Activated naive CD4-positive, alpha-beta T cell treated with anti-CD3 and anti-CD28 coated beads for 36 hours (primary cell): ENCODE measurements at regions of chr21 and their contacts with region 1.

Region 1: DNA sequence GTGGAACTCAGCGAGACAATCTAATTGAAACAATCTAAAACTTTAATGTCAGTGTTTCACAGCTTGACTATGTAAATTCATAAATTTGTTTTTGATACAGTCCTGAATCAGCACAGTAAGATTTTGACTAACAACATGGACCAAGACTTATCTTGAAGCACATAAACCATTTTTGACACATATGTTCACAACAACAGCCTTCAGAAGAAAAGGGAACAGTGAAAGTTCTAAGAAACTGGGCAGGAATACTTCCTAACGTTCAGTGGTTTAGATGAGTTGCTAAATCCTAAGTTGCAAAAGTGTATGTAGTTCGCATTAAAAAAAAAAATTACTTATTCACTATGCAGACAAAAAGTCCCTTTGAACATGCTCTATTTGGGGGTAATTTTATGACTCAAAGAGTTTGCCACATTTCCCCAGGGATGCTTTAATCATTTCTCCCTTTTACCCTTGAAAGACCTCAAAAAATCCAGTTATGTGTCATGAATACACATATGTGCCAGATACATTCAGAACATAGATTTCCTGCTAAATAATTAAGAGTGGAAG is 120.2 kb downstream of the MRPL39 start:
- DNase-seq: no peak
- H3K4me3 Mint-ChIP-seq: peak overlapping the region; percentile 14
- H3K27ac Mint-ChIP-seq: peak overlapping the region; percentile 74
- H3K4me1 Mint-ChIP-seq: peaks cover 65% of the 10 kb centered on the region
- H3K27me3 Mint-ChIP-seq: no peaks in the 10 kb centered on the region

Region 2: DNA sequence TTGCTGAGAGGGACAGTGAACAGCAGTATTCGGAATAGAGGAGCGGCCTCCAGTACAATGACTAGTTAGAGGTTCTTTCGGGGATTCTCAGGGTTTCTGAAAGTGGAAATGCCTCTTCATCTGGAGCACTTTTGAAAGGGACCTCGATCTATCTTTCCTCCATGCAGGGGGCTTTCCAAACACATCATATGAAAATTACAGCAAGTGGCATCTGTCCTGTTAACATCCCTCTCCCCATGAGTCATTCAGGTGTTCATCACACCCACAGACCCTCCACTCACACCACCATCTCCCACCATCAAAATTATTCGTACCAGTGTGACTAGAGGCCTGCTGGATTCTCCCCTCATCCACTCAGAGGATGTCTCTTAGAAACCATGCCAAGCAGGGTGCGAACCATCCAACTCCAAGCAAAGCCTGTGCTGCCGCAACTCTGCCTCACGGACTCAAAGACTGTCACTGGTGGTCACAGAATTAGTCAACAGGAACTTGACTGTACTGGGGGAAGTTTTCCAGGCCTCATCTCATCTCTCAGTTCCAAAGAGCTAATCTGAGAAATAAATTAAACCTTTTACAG is 90.9 kb before region 1 on chr21:
- CTCF ChIA-PET with region 1: no interaction called
- intact Hi-C with region 1: loop called (anchors 1 kb)
- DNase-seq: peak; percentile 89
- H3K4me3 Mint-ChIP-seq: peak overlapping the region; percentile 41
- H3K27ac Mint-ChIP-seq: peak overlapping the region; percentile 81
- H3K4me1 Mint-ChIP-seq: peaks cover 18% of the 10 kb centered on the region
- H3K27me3 Mint-ChIP-seq: peaks cover 2% of the 10 kb centered on the region

Region 3: DNA sequence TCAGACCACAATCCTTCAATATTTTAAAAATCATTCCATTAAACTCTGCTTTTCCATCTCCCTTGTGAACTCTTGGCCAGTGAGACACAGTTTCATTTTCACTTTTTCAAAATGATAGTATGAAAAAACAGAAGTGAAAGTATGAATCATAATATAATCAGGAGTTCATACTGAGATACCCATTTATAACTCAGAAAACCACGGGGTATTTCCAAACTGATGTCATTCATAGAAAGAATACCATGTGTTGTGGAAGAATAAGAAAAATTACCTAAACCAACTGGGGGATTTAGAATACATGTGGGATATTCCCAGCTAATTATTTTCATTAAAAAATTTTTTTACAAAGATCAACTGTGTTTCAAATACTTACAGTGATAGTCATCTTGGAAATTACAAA is 29.7 kb before region 1 on chr21:
- CTCF ChIA-PET with region 1: interaction called, 3 read pairs
- intact Hi-C with region 1: loop called (anchors 1 kb)
- DNase-seq: no peak
- H3K4me3 Mint-ChIP-seq: peak overlapping the region; percentile 48
- H3K27ac Mint-ChIP-seq: peak overlapping the region; percentile 84
- H3K4me1 Mint-ChIP-seq: peaks cover 74% of the 10 kb centered on the region
- H3K27me3 Mint-ChIP-seq: no peaks in the 10 kb centered on the region

Region 4: DNA sequence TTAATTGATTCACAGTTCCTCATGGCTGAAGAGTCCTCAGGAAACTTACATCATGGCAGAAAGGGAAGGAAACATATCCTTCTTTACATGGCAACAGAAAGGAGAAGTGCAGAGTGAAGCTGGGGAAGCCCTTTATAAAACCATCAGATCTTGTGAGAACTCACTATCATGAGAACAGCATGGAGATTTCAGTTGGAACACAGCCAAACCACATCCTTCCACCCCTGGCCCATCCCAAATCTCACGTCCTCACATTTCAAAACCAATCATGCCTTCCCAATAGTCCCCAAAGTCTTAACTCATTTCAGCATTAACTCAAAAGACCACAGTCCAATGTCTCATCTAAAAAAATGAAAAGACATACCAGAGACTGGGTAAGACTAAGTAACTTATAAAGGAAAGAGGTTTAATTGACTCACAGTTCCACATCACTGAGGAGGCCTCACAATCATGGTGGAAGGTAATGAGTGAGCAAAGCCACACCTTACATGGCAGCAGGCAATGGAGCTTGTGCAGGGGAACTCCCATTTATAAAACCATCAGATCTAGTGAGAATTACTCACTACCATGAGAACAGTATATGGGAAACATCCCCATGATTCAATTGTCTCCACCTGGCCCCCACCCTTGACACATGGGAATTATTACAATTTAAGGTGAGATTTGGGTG is 15.0 kb after region 1 on chr21:
- CTCF ChIA-PET with region 1: interaction called, 12 read pairs
- intact Hi-C with region 1: loop called (anchors 1 kb)
- DNase-seq: peak; percentile 87
- H3K4me3 Mint-ChIP-seq: peak overlapping the region; percentile 53
- H3K27ac Mint-ChIP-seq: peak overlapping the region; percentile 92
- H3K4me1 Mint-ChIP-seq: peaks cover 78% of the 10 kb centered on the region
- H3K27me3 Mint-ChIP-seq: no peaks in the 10 kb centered on the region

Region 5: GRCh38 chr21:25515484-25516405 is 28.6 kb after region 1 on chr21:
- CTCF ChIA-PET with region 1: interaction called, 3 read pairs
- intact Hi-C with region 1: loop called (anchors 1 kb)
- DNase-seq: no peak
- H3K4me3 Mint-ChIP-seq: no peak overlapping the region
- H3K27ac Mint-ChIP-seq: no peak overlapping the region
- H3K4me1 Mint-ChIP-seq: peaks cover 46% of the 10 kb centered on the region
- H3K27me3 Mint-ChIP-seq: no peaks in the 10 kb centered on the region

Region 6: DNA sequence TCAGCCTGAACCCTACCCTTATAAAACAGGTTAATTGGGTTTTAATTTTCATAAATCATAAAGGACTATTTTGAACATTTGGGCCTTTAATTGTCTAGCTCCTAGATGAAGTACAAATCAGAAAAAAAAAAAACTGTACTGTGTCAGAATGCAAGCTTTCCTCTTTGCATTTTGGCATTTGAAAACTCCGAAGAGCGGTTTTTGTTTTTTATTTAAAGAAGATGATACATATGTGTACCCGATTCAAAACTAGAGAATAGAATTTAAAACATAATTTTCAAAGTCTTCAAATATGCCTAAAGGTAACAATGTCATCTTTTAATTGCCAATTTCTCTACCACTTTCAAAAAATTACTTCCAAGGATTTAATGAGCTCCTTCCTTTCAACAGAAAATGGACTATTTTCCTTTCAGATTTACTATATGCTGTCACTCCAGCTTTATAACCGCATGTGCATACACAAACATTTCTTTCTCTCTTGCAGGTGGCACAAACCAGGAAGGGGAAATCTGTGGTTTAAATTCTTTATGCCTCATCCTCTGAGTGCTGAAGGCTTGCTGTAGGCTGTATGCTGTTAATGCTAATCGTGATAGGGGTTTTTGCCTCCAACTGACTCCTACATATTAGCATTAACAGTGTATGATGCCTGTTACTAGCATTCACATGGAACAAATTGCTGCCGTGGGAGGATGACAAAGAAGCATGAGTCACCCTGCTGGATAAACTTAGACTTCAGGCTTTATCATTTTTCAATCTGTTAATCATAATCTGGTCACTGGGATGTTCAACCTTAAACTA is 86.5 kb after region 1 on chr21:
- CTCF ChIA-PET with region 1: interaction called, 5 read pairs
- intact Hi-C with region 1: loop called (anchors 1 kb)
- DNase-seq: peak; percentile 82
- H3K4me3 Mint-ChIP-seq: peak overlapping the region; percentile 72
- H3K27ac Mint-ChIP-seq: peak overlapping the region; percentile 95
- H3K4me1 Mint-ChIP-seq: peaks cover 73% of the 10 kb centered on the region
- H3K27me3 Mint-ChIP-seq: no peaks in the 10 kb centered on the region

Region 7: GRCh38 chr21:25708467-25709065 is 221.4 kb after region 1 on chr21:
- CTCF ChIA-PET with region 1: no interaction called
- intact Hi-C with region 1: no loop called
- DNase-seq: peak; percentile 60
- H3K4me3 Mint-ChIP-seq: no peak overlapping the region
- H3K27ac Mint-ChIP-seq: no peak overlapping the region
- H3K4me1 Mint-ChIP-seq: no peaks in the 10 kb centered on the region
- H3K27me3 Mint-ChIP-seq: no peaks in the 10 kb centered on the region